ENCODE measurements at regions of chr7 and their contacts with region 1.

Region 1: GRCh38 chr7:156612930-156613329 is 27.6 kb upstream of the RNF32 start:
- DNase-seq: peak; percentile 95
- H3K4me3 Mint-ChIP-seq: peak overlapping the region; percentile 70
- H3K27ac Mint-ChIP-seq: peak overlapping the region; percentile 68
- H3K4me1 Mint-ChIP-seq: peaks cover 43% of the 10 kb centered on the region
- H3K27me3 Mint-ChIP-seq: peaks cover 67% of the 10 kb centered on the region

Region 2: DNA sequence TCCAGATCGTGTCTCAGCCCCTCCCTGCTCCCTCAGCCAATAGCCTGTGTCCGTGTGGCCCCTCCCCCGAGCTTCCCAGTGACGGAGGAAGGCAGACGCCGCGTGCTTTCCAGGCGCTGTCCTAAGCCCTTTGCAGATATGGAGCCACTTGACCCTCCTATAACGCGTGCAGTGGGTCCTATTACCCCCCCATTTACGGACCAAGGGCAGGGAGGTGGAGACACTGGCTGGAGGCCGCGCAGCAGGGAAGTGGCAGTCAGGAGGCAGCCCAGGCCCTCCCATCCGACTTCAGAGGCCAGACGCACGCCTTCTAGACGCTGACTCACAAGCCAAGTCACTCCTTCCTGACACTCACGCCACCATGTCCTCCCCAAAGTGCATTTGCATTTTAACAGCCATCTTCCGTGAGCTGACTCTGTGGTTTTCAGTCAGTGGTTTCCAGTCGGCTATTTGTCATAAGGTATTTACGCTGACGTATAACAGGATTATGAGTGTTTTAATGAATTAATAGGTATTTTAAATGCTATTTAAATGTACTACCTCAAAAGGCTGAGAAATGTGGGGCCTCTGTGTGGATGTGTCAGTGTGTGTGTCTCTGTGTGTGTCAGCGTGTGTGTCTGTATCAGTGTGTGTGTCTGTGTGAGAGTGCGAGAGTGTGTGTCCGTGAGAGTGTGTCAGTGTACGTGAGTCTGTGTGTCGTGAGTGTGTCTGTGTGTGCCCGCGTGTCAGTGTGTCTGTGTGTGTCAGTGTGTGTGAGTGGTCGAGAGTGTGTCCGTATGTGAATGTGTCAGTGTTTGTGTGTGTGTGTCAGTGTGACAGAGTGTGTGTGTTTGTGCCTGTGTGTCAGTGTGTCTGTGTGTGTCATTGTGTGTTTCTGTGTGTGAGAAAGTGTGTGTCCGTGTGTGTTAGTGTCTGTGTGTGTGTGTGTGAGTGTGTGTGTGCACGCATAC is 1407.3 kb before region 1 on chr7:
- intact Hi-C with region 1: loop called (anchors 10 kb)
- DNase-seq: peak; percentile 96
- H3K4me3 Mint-ChIP-seq: peak overlapping the region; percentile 85
- H3K27ac Mint-ChIP-seq: peak overlapping the region; percentile 96
- H3K4me1 Mint-ChIP-seq: peaks cover 34% of the 10 kb centered on the region
- H3K27me3 Mint-ChIP-seq: no peaks in the 10 kb centered on the region

Region 3: GRCh38 chr7:156650042-156650441 is 37.1 kb after region 1 on chr7:
- intact Hi-C with region 1: no loop called
- DNase-seq: peak; percentile 72
- H3K4me3 Mint-ChIP-seq: no peak overlapping the region
- H3K27ac Mint-ChIP-seq: no peak overlapping the region
- H3K4me1 Mint-ChIP-seq: peaks cover 8% of the 10 kb centered on the region
- H3K27me3 Mint-ChIP-seq: peaks cover 36% of the 10 kb centered on the region